B cell (primary cell): ENCODE measurements at regions of chr17 and their contacts with region 1.

Region 1: GRCh38 chr17:77451245-77451893 is 310.6 kb downstream of the SEC14L1 start:
- DNase-seq: peak; percentile 70
- ATAC-seq: peak; percentile 59
- H3K4me3 ChIP-seq: peak overlapping the region; percentile 91 to 96 (median 92)
- H3K4me3 Mint-ChIP-seq: peak overlapping the region; percentile 93
- H3K27ac ChIP-seq: peak overlapping the region; percentile 66 to 96
- H3K27ac Mint-ChIP-seq: peak overlapping the region; percentile 96
- H3K4me1 ChIP-seq: peaks cover 67 to 86% of the 10 kb centered on the region in 2 donors
- H3K4me1 Mint-ChIP-seq: peaks cover 69% of the 10 kb centered on the region
- H3K27me3 ChIP-seq: no peaks in the 10 kb centered on the region
- H3K27me3 Mint-ChIP-seq: no peaks in the 10 kb centered on the region
- CTCF ChIP-seq: no peak

Region 2: DNA sequence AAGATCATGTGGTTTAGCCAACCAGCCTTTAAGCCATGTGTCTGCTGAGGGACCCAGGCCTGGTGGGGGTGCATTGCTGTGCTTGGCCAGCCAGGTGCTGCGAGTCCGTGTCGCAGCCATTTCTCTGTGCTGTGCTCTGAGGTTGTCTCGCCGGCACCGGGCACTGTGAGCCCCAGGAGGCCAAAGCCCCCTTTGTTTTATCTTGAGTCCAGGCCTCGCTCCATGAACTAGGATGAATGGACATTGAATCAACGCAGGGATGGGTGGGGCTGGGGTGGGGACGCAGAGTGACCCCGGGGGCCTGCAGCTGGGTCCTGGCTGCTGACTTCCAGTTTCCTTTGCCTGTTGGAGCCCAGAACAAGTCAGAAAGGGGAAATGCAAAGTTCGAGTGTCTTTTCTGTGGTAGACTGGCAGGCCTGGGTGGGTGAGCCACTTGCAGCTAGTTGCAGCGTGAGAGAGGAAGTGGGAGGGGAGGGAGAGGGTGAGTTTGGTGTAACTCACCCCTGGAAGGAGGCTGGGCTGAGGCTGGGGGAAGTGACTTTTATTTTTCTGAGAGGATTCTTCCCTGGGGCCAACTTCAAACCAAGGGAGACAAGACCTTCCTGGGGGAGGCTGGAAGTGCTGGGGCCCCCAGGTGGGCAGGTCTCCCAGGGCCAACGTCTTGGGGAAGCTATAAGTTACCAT is 14.1 kb after region 1 on chr17:
- CTCF ChIA-PET with region 1: interaction called, 31 read pairs
- POLR2A ChIA-PET with region 1: interaction called, 40 read pairs
- intact Hi-C with region 1: loop called (anchors 1 kb)
- DNase-seq: peak; percentile 94
- ATAC-seq: peak; percentile 78
- H3K4me3 ChIP-seq: peak overlapping the region; percentile 12 to 56 (median 38)
- H3K4me3 Mint-ChIP-seq: peak overlapping the region; percentile 81
- H3K27ac ChIP-seq: peak overlapping the region; percentile 55 to 89
- H3K27ac Mint-ChIP-seq: peak overlapping the region; percentile 95
- H3K4me1 ChIP-seq: peaks cover 90 to 98% of the 10 kb centered on the region in 2 donors
- H3K4me1 Mint-ChIP-seq: peaks cover 86% of the 10 kb centered on the region
- H3K27me3 ChIP-seq: no peaks in the 10 kb centered on the region
- H3K27me3 Mint-ChIP-seq: no peaks in the 10 kb centered on the region
- CTCF ChIP-seq: no peak